A673 (cell line): ENCODE measurements at regions of chr18 and their contacts with region 1.

Region 1: DNA sequence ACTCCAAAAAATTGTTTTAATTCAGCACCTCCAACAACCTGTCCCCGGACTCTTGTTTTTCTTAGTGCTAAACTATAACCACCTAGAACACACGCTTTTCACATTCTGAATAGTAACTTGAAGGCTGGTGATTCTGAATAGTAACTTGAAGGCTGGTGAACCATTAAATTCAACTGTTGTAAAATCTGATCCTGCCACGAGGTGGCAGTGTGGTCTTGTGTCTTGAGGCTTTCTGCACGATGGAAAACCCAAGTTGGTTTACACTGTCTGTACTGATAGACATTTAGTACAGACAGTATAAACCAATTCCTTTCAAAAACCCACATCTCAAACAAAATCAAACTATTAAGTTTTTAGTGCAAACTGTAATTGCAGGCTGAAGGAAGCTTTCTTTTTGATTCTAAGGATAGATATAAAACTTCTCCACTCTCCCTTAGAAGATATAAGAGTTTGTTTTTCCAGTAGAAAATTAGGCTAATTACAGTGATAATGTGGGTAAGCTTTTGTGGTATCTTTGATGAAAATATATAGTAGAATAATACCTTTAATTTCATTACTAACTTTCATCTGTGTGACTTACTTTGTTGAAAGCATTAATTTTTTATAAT is 57.6 kb downstream of the VAPA start:
- DNase-seq: peak; percentile 89
- H3K4me3 ChIP-seq: no peak overlapping the region
- H3K27ac ChIP-seq: peak overlapping the region; percentile 16
- H3K4me1 ChIP-seq: peaks cover 16% of the 10 kb centered on the region
- H3K27me3 ChIP-seq: no peaks in the 10 kb centered on the region
- CTCF ChIP-seq: peak; percentile 83

Region 2: GRCh38 chr18:9280849-9281248 is 690.6 kb before region 1 on chr18:
- CTCF ChIA-PET with region 1: no interaction called
- POLR2A ChIA-PET with region 1: no interaction called
- intact Hi-C with region 1: no loop called
- DNase-seq: no peak
- H3K4me3 ChIP-seq: no peak overlapping the region
- H3K27ac ChIP-seq: no peak overlapping the region
- H3K4me1 ChIP-seq: no peaks in the 10 kb centered on the region
- H3K27me3 ChIP-seq: no peaks in the 10 kb centered on the region
- CTCF ChIP-seq: no peak

Region 3: GRCh38 chr18:10100941-10101701 is 129.7 kb after region 1 on chr18:
- CTCF ChIA-PET with region 1: no interaction called
- POLR2A ChIA-PET with region 1: no interaction called
- intact Hi-C with region 1: loop called (anchors 10 kb)
- DNase-seq: peak; percentile 91
- H3K4me3 ChIP-seq: peak overlapping the region; percentile 7
- H3K27ac ChIP-seq: peak overlapping the region; percentile 47
- H3K4me1 ChIP-seq: peaks cover 22% of the 10 kb centered on the region
- H3K27me3 ChIP-seq: no peaks in the 10 kb centered on the region
- CTCF ChIP-seq: peak; percentile 28; the same call in 1 of the 2 replicates

Region 4: DNA sequence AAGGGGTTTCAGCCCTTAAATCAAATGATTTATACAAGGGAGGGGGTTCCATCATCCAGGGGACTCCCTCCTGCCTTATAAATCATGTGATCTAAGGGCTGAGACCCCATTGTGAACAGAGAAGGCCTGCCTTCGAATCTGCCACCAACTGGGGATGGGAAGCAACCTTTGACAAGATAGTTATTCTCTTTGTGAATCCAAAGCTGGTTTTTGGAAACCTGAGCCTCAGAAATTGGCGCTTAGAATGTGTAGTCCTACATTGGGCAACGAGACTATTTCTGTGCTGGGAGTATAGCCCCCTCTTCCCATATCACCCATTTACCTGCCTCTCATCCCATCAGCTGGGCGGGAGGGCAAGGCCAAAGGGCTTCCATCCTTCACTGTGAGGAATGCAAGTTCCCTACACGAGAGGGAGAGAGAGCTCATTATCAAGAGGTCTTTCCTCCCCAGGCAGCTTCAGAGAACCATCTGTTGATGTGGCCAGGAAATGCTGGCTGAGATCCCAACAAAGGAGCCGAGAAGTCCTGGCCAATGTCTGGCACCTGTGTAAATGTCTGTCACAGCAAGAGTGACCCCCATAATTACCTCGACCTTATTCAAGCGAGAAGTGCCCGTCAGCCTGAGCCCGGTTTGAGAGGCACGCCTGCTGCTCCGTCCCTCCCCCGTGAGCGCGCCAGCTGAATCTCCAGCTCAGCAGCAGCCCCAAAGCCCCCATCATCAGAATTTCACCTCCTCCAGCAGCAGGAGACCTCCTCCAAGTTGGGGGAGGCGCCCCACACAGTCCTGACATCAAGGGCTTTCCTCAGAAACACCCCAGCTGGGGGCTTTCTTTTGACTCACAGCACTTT is 434.6 kb after region 1 on chr18:
- CTCF ChIA-PET with region 1: no interaction called
- POLR2A ChIA-PET with region 1: no interaction called
- intact Hi-C with region 1: loop called (anchors 5 kb)
- DNase-seq: peak; percentile 52
- H3K4me3 ChIP-seq: no peak overlapping the region
- H3K27ac ChIP-seq: peak overlapping the region; percentile 9
- H3K4me1 ChIP-seq: peaks cover 54% of the 10 kb centered on the region
- H3K27me3 ChIP-seq: peaks cover 4% of the 10 kb centered on the region
- CTCF ChIP-seq: no peak

Region 5: DNA sequence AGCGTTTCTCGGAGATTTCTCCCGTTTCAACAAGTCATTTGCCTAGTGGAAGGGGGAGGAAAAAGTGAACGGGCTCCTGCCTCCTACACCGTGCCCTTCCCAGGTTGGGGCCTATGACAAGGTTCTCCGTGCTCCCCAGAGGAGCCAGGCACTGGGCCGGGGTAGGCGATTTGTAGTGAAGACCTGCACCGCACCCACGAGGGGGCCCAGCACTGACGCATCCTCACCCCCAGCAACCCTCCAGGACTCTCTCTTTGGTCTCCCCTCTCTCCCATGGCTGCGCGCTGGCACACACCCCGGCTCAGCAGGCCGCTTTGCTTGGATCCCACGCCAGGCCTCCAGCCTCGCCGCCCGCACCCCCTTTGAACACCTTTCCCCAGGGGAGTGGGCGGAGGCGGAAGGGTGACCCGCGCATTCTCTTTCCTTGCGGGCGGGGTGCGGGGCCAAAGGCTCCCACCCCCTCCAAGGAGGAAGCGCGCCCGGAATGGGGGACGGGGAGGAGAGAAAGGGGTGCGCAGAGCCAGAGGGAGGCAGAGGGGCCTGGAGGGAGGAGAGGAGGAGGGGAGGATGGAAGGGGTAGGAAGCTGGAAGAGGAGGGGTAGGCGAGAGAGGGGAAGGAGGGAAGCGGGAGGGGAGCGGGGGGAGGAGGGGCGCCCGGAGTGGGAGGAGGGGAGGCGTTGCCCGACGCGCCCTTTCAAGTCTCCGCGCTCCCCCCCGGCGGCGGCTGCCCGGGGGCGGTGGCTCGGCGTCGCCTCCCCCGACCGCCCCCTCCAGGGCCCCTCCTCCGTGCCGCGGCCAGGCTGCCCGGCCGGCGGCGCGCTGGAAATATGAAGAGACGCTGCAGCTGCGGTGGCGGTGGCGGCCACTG is 482.6 kb after region 1 on chr18 and contains the start of gene APCDD1:
- CTCF ChIA-PET with region 1: interaction called, 4 read pairs
- POLR2A ChIA-PET with region 1: interaction called, 3 read pairs
- intact Hi-C with region 1: loop called (anchors 2 kb)
- DNase-seq: peak; percentile 93
- H3K4me3 ChIP-seq: peak within 1 kb of the TSS; percentile 73
- H3K27ac ChIP-seq: peak within 1 kb of the TSS; percentile 99
- H3K4me1 ChIP-seq: peaks cover 45% of the 10 kb centered on the region
- H3K27me3 ChIP-seq: no peaks in the 10 kb centered on the region
- CTCF ChIP-seq: no peak
- total RNA-seq, gene APCDD1: 333 and 355 TPM in 2 replicates

Region 6: DNA sequence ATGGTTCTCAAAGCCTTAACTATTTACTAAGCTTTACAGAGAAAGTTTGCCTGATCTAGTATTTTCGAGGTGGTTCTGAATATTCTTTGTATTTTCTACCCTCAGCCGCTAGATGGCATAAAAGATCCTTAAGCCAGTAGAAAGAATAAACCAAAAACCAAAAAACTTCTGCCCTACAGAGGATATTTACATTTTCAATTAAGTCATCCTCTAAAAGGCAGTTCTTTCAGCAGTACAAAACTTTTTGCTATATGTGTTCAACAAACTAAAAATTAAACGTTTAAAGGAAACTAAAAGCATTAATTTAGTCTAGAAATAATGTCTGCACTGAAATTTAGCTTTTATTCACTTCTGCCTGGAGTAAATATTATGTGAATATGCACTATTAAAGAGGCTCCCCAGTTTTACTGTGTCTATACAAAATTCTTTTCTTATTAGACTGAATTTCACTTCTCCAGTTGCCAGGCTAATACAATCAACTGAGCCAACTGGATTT is 880.5 kb after region 1 on chr18:
- CTCF ChIA-PET with region 1: no interaction called
- POLR2A ChIA-PET with region 1: no interaction called
- intact Hi-C with region 1: loop called (anchors 5 kb)
- DNase-seq: peak; percentile 77
- H3K4me3 ChIP-seq: no peak overlapping the region
- H3K27ac ChIP-seq: no peak overlapping the region
- H3K4me1 ChIP-seq: no peaks in the 10 kb centered on the region
- H3K27me3 ChIP-seq: peaks cover 27% of the 10 kb centered on the region
- CTCF ChIP-seq: peak; percentile 81

Region 7: DNA sequence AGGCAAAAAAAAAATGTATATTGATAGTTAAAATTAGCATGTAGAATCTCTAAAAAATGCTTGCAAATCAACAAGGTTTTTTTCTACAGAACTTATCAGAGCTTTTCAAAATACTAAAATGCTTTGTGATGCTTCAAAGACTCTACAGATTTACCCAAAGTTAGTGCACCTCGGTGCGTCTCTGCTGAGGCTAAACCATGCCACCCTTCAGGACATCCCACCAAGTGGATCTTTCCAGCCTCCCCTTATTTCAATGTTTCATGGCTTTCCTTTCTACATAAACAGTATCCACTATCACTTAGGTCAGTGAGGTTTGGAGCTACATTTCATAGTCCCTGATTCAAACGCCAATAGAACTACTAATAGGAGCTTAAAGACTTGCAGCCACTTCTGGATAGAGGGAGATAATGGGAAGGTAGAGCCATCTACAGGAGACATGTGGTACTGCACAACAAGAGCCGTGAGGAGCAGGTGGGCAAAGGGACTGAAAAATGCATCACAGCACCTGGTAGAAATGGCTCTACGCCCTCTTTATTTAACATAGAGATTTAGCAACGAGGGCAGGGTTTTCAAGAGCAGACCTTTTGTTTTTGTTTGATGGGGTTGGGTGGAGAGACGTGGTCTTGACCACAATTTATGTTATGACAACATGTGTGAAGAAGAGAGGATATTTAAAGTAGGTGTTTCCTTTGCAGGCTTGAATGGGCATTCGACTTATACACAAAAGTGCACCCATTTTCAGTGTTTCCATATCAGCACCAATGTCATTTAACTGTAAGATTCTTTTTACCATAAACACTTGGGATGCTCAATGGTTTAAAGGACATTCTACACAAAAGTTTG is 1581.9 kb after region 1 on chr18:
- CTCF ChIA-PET with region 1: no interaction called
- POLR2A ChIA-PET with region 1: no interaction called
- intact Hi-C with region 1: loop called (anchors 10 kb)
- DNase-seq: peak; percentile 63
- H3K4me3 ChIP-seq: no peak overlapping the region
- H3K27ac ChIP-seq: no peak overlapping the region
- H3K4me1 ChIP-seq: no peaks in the 10 kb centered on the region
- H3K27me3 ChIP-seq: peaks cover 7% of the 10 kb centered on the region
- CTCF ChIP-seq: peak; percentile 88